ENCODE measurements at regions of chr14 and their contacts with region 1.

Region 1: GRCh38 chr14:20855652-20856291 is 35.4 kb upstream of the RNASE3 start:
- DNase-seq: peak in 5 of 6 donors; percentile 54 to 73 (median 59)
- ATAC-seq: peak; percentile 95 to 99 (median 97)
- H3K4me3 ChIP-seq: no peak overlapping the region
- H3K27ac ChIP-seq: no peak overlapping the region
- H3K4me1 ChIP-seq: peaks cover 0 to 4% (median 0%) of the 10 kb centered on the region in 3 donors
- H3K27me3 ChIP-seq: no peaks in the 10 kb centered on the region
- CTCF ChIP-seq: peak in 3 of 4 donors; percentile 51 to 64 (median 58)

Region 2: GRCh38 chr14:20681348-20682126 is 174.2 kb before region 1 on chr14:
- intact Hi-C with region 1: no loop called
- DNase-seq: peak; percentile 77 to 95 (median 82)
- ATAC-seq: peak; percentile 40 to 60 (median 48)
- H3K4me3 ChIP-seq: peak overlapping the region; percentile 54 to 65 (median 56)
- H3K27ac ChIP-seq: peak overlapping the region; percentile 96 to 99 (median 99)
- H3K4me1 ChIP-seq: peaks cover 7 to 19% (median 10%) of the 10 kb centered on the region in 3 donors
- H3K27me3 ChIP-seq: no peaks in the 10 kb centered on the region
- CTCF ChIP-seq: no peak

Region 3: DNA sequence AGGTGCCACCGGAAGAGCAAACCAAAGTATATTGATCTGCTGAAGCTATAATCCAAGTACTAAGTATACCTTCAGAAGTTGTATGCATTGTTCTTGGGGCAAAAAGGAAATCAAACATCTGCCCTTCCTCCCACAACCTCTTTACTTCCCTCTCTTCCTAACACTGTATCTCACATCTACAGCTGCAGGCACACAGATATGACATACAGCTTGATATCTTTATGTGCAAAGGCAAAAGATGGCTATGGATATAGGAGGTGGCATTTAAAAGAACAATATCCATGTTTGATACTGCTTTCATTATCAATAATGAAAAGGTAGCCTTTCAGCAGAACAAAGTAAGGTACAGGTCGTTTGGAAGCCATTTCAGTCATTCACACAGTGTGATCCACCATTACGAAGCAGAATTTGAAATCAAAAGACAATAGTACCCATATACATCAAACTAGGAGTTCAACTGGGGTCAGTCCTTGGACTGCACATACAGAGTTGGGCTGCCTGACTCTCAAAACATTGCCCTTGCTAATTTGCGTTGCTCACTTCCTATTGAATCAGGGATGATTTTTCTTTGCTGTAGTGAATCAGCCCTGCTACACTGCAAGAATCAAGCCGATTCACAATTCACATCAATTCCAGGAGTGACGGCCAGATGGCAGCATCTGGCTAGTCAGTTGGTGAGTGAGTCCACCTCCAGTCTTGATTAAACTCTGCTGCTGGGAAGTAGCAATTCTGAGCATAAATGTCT is 158.3 kb before region 1 on chr14:
- intact Hi-C with region 1: loop called in 2 of 3 experiments (anchors 5 kb)
- DNase-seq: peak in 2 of 6 donors; percentile 36 to 74
- ATAC-seq: peak; percentile 80 to 96 (median 94)
- H3K4me3 ChIP-seq: no peak overlapping the region
- H3K27ac ChIP-seq: no peak overlapping the region
- H3K4me1 ChIP-seq: peaks cover 0 to 7% (median 0%) of the 10 kb centered on the region in 3 donors
- H3K27me3 ChIP-seq: no peaks in the 10 kb centered on the region
- CTCF ChIP-seq: peak; percentile 29 to 70 (median 53)

Region 4: GRCh38 chr14:20757965-20758364 is 97.8 kb before region 1 on chr14:
- intact Hi-C with region 1: loop called in 1 of 3 experiments (anchors 10 kb)
- DNase-seq: peak in 4 of 6 donors; percentile 11 to 57 (median 42)
- ATAC-seq: peak in 3 of 4 donors; percentile 56 to 84 (median 59)
- H3K4me3 ChIP-seq: no peak overlapping the region
- H3K27ac ChIP-seq: no peak overlapping the region
- H3K4me1 ChIP-seq: peaks cover 0 to 3% (median 0%) of the 10 kb centered on the region in 3 donors
- H3K27me3 ChIP-seq: no peaks in the 10 kb centered on the region
- CTCF ChIP-seq: peak in 3 of 4 donors; percentile 10 to 27 (median 13)

Region 5: DNA sequence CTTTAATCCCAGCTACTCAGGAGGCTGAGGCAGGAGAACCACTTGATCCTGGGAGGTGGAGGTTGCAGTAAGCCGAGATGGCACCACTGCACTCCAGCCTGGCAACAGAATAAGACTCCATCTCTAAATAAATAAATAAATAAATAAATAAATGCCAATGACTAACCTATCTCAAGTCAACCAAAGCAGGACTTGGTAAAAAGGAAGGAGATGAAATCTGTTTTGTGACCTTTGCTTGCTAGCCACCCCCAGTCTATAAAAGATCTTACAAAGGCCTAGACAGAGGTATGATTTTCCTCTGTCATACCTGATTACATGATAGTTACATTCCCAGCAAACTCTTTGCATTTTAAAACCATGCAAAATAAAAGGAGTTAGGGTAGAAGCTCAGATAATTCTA is 120.5 kb after region 1 on chr14:
- intact Hi-C with region 1: no loop called
- DNase-seq: no peak
- ATAC-seq: no peak
- H3K4me3 ChIP-seq: no peak overlapping the region
- H3K27ac ChIP-seq: no peak overlapping the region
- H3K4me1 ChIP-seq: peaks cover 0 to 4% (median 0%) of the 10 kb centered on the region in 3 donors
- H3K27me3 ChIP-seq: no peaks in the 10 kb centered on the region
- CTCF ChIP-seq: no peak

Measured in pancreas (tissue), 10 donors.